Psoas muscle (tissue), 8 donors: ENCODE measurements at regions of chr13 and their contacts with region 1.

Region 1: DNA sequence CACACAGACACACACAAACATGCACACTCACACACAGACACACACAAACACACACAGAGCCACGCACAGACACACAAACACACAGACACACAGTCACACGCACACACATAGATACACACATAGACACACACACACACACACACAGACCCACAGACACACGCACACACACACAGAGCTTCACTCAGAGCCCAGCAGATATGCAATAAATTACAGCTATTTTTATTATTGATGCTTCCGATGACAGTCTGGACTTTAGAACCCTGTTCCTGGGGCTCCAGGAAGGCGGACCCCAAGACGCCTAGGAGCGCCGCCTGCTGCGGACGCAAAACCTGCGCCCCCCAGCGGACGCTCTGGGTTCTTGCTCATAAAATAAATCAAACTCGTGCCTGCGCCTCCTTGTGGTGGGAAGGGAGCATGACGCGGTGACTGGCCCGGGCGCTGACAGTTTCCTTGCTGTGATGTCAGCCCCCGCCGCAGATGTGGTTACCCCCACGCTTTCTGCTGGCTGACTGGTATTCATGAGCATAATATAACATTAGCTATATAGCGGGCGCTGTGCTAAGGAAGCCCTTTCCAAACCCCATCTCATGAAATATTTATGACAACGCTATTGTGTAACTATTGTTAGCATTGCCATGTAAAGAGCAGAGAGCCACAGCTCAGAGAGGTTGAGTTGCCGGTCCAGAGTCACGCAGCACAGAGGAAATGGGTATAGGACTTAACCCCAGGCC is 64.4 kb upstream of the TM9SF2 start:
- DNase-seq: peak; percentile 82 to 90
- ATAC-seq: peak; percentile 77 to 90 (median 84)
- H3K4me3 ChIP-seq: peak overlapping the region; percentile 10
- H3K27ac ChIP-seq: no peak overlapping the region
- H3K4me1 ChIP-seq: no peaks in the 10 kb centered on the region
- H3K27me3 ChIP-seq: peaks cover 0 to 3% (median 0%) of the 10 kb centered on the region in 3 donors
- CTCF ChIP-seq: peak; percentile 99

Region 2: DNA sequence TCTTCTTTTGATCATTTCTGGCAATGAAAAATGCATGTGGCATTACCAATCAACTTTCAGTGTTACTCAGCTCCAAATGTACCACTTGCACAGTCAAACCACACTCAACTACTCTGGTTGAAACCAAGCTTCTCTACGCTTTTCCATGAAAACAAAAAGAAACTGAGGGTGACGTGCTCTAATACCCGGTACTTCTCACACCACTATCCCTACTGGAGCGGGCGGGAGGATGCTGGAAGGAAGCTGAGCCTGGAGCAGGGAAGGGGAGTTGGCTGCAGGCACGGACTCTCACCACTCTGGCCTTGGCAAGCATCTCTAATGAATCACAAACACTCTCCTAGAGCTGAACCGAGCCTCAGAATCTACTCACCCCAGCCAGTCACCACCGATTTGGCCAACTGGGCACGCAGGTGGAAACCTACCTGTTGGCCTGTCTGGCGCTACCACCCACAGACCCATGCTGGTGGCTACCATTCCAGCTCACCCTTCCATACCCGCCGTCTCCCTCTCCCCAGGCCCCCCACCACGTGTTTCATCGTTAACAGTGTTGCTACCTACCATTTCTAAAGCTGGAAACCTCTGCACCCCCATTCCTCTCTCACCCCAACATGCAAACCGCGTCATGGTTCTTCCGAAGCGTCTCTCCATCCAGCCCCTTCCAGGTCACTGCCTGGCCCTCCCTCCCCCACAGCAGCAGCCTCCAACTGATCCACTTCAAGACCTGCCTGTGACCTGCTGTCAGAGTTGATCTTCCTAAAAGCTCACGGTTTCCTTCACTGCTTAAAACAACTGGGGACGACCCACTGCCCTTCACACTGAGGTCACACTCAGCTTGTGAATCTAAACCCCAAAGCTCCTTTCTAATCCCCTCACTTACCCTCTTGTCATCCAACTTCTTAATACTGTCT is 907.9 kb before region 1 on chr13:
- intact Hi-C with region 1: no loop called
- DNase-seq: peak in 1 of 2 donors; percentile 63
- ATAC-seq: peak in 3 of 4 donors; percentile 45 to 62 (median 55)
- H3K4me3 ChIP-seq: no peak overlapping the region
- H3K27ac ChIP-seq: no peak overlapping the region
- H3K4me1 ChIP-seq: peaks cover 67% of the 10 kb centered on the region
- H3K27me3 ChIP-seq: no peaks in the 10 kb centered on the region
- CTCF ChIP-seq: no peak

Region 3: GRCh38 chr13:99178636-99179035 is 258.2 kb before region 1 on chr13:
- intact Hi-C with region 1: loop called (anchors 2 kb)
- DNase-seq: peak in 1 of 2 donors; percentile 74
- ATAC-seq: no peak
- H3K4me3 ChIP-seq: no peak overlapping the region
- H3K27ac ChIP-seq: no peak overlapping the region
- H3K4me1 ChIP-seq: no peaks in the 10 kb centered on the region
- H3K27me3 ChIP-seq: peaks cover 0 to 3% (median 0%) of the 10 kb centered on the region in 3 donors
- CTCF ChIP-seq: no peak

Region 4: DNA sequence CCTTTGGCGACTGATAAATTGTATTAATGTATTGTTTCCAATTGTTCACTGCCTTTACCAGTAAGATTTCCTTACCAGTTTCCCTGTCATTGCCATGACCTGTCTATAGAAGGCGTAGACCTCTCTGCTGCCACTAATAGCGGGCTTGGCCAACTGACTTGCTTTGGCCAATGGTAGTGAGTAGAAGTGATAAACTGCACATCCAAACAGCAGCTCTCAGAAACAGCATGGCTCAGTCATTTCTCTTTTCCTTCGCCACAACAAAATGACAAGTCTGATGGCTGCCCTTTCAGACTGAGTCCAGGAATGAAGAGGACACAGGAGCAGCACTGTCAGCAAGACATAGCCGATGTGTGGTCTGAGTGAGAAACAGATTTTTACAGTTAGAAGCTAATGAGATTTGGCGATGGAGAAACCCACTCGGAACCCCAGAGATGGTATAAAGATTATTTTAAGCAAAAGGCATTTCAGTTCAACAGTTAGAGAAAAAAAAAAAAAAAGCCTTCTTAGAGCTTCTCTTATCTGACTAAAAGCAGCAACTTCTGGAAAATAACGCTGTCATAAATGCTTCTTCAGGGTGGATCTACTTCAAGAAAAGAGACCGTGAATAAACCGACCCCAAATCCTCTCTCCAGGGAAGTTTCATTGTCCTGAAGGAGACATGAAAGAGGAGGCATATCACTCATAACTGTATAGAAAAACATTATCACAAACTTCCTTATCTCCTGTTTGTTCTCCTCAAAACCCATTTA is 22.4 kb after region 1 on chr13:
- intact Hi-C with region 1: no loop called
- DNase-seq: no peak
- ATAC-seq: no peak
- H3K4me3 ChIP-seq: no peak overlapping the region
- H3K27ac ChIP-seq: no peak overlapping the region
- H3K4me1 ChIP-seq: no peaks in the 10 kb centered on the region
- H3K27me3 ChIP-seq: peaks cover 0 to 3% (median 0%) of the 10 kb centered on the region in 3 donors
- CTCF ChIP-seq: no peak

Region 5: GRCh38 chr13:99542788-99543406 is 106.0 kb after region 1 on chr13:
- intact Hi-C with region 1: no loop called
- DNase-seq: no peak
- ATAC-seq: no peak
- H3K4me3 ChIP-seq: no peak overlapping the region
- H3K27ac ChIP-seq: no peak overlapping the region
- H3K4me1 ChIP-seq: no peaks in the 10 kb centered on the region
- H3K27me3 ChIP-seq: no peaks in the 10 kb centered on the region
- CTCF ChIP-seq: no peak